ENCODE measurements at regions of chr7 and their contacts with region 1.

Region 1: GRCh38 chr7:105084581-105084980 is 70.6 kb downstream of the KMT2E start:
- DNase-seq: no peak
- H3K4me3 ChIP-seq: no peak overlapping the region
- H3K27ac ChIP-seq: no peak overlapping the region
- H3K4me1 ChIP-seq: no peaks in the 10 kb centered on the region
- H3K27me3 ChIP-seq: no peaks in the 10 kb centered on the region
- CTCF ChIP-seq: no peak
- EP300 ChIP-seq: no peak
- POLR2A ChIP-seq: no peak

Region 2: DNA sequence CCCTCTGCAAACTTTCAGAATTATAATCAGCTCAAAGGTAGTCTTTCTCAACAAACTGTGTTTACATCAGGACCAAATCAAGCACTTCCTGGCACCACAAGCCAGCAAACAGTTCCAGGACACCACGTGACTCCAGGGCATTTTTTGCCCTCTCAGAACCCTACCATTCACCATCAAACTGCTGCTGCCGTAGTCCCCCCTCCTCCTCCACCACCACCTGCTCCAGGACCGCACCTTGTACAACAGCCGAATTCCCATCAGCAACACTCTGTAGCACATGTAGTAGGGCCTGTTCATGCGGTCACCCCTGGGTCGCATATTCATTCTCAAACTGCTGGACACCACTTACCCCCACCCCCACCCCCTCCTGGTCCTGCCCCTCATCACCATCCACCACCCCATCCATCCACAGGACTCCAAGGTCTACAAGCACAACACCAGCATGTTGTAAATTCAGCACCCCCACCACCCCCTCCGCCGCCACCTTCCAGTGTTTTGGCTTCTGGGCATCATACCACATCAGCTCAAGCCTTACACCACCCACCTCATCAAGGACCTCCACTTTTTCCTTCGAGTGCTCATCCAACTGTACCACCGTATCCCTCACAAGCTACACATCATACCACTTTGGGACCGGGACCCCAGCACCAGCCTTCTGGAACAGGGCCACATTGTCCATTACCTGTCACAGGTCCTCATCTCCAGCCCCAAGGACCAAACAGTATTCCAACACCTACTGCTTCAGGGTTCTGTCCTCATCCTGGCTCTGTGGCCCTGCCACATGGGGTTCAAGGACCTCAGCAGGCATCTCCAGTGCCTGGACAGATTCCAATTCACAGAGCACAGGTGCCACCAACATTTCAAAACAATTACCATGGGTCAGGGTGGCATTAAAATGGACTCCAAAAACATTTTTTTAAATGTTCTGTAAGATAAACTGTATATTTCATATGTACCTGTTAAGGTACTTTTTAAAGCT is 28.1 kb after region 1 on chr7:
- intact Hi-C with region 1: no loop called
- DNase-seq: no peak
- H3K4me3 ChIP-seq: no peak overlapping the region
- H3K27ac ChIP-seq: no peak overlapping the region
- H3K4me1 ChIP-seq: no peaks in the 10 kb centered on the region
- H3K27me3 ChIP-seq: no peaks in the 10 kb centered on the region
- CTCF ChIP-seq: no peak
- EP300 ChIP-seq: no peak
- POLR2A ChIP-seq: no peak

Region 3: GRCh38 chr7:105454095-105454747 is 369.6 kb after region 1 on chr7:
- intact Hi-C with region 1: loop called in 1 of 4 experiments (anchors 10 kb)
- DNase-seq: no peak
- H3K4me3 ChIP-seq: no peak overlapping the region
- H3K27ac ChIP-seq: no peak overlapping the region
- H3K4me1 ChIP-seq: no peaks in the 10 kb centered on the region
- H3K27me3 ChIP-seq: no peaks in the 10 kb centered on the region
- CTCF ChIP-seq: no peak
- EP300 ChIP-seq: no peak
- POLR2A ChIP-seq: no peak

Measured in ovary (tissue), 10 donors.